ENCODE measurements at regions of chr15 and their contacts with region 1.

Region 1: DNA sequence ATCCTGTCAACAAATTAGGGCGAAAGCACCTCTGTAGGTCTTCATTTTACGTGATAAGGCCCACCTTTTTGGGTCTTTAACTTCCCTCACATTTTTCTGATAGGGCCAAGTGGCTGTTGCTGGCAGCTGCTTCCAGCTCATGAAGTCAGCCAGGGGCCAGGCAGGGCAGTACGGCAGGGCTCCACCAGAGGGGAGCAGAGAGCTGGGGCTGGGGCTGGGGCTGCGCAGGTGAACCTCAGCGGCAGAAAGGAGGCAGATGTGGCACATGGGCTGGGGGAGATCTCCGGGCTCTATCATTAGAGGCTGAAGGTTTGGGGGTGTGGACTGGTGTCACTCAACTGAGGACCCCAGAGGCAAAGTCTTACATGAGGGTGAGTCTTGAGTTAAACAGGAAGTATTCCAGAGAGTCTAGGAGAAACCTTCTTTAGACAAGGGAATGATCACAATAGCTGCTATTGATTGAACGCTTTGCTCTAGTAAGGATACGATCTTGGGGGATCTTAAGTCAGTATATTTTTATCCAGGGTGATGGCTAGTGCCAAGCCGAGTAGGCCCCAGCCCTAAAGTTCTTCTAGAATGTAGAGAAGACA is 62.8 kb upstream of the MEX3B start:
- DNase-seq: no peak
- H3K4me3 ChIP-seq: no peak overlapping the region
- H3K27ac ChIP-seq: no peak overlapping the region
- H3K27me3 ChIP-seq: no peaks in the 10 kb centered on the region
- CTCF ChIP-seq: peak; percentile 97

Region 2: DNA sequence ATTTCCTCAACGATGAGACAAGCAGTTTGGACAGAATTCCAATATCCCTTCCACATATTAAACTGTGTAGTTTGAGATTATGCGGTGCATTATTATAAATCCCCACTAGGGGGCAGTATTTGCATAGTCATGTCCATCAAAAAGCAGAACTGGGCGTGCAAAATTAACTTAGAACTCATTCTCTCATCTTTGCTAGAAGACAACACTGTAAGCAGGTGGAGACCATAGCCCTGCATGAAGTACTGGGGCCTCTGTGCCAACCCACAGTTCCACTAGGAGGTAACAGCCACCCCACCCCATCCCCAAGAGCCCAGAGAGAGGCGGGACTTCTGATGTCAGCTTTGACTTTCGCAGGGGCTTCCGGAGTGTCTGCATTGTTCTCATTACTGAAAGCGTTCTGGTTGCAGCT is 627.9 kb before region 1 on chr15:
- CTCF ChIA-PET with region 1: interaction called, 14 read pairs
- POLR2A ChIA-PET with region 1: no interaction called
- DNase-seq: peak; percentile 29
- H3K4me3 ChIP-seq: no peak overlapping the region
- H3K27ac ChIP-seq: no peak overlapping the region
- H3K27me3 ChIP-seq: no peaks in the 10 kb centered on the region
- CTCF ChIP-seq: peak; percentile 70

Region 3: DNA sequence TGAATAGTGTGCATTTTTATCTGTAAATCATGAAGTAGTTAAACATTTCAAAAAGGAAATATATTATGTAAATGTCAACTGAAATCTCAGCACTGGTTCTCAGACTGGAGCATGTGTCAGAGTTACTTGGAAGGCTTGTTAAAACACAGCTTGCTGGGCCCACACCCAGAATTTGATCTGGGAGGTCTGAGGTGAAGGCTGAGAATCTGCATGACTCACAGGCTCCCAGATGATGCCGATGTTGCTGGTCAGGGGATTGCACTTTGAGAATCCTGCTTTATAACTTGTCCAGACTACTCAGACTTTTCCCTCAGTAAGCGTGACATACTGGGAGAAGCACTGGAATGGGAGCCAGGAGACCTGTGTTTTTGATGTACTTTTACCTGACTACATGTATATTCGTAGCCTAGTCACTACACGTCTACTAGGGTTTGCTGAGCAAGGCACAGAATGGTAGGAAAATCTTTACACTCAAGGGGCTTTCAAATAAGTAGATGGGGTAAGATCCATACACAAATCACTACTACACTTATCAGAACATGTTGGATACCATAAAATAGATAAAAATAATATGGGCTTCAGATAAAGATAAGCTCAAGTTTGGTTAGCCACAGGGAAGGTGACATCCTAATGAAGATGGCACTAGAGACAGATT is 14.3 kb after region 1 on chr15:
- CTCF ChIA-PET with region 1: interaction called, 65 read pairs
- POLR2A ChIA-PET with region 1: no interaction called
- DNase-seq: peak; percentile 95
- H3K4me3 ChIP-seq: no peak overlapping the region
- H3K27ac ChIP-seq: peak overlapping the region; percentile 69
- H3K27me3 ChIP-seq: no peaks in the 10 kb centered on the region
- CTCF ChIP-seq: no peak

Region 4: GRCh38 chr15:82139823-82140268 is 31.3 kb after region 1 on chr15:
- CTCF ChIA-PET with region 1: interaction called, 56 read pairs
- POLR2A ChIA-PET with region 1: no interaction called
- DNase-seq: no peak
- H3K4me3 ChIP-seq: no peak overlapping the region
- H3K27ac ChIP-seq: no peak overlapping the region
- H3K27me3 ChIP-seq: no peaks in the 10 kb centered on the region
- CTCF ChIP-seq: peak; percentile 82

Region 5: DNA sequence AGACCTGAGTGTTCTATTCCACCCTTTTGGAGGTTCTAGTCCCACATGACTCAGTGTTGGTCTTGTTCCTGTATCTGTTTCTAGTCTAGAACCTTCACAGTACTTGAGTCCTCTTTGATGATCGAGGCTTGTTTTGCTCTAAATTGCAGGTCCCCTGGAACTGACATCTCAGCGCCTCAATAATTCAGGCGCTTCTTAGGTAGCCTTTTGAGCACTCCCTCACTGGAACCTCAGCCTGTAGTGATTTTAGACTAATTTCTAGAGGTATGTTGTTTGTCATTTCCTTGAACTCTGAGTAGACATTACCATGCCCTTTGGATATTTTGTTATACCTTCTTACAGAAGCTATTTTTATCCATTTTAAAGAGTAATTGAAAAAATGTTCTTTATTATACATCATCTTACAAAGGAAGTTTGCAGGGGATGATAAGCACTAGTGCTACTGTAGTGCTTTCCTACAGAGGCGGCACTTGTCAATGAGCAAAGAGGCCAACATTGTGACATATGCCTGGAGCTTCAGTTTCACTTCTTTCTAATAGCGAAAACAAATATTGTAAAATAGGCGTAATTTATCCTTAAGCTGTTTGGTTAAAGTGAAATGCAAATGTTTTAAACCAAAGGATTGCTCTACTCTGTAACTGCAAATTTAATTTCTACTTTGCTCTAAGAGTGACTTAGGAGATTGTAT is 78.3 kb after region 1 on chr15:
- CTCF ChIA-PET with region 1: interaction called, 11 read pairs
- POLR2A ChIA-PET with region 1: no interaction called
- DNase-seq: no peak
- H3K4me3 ChIP-seq: no peak overlapping the region
- H3K27ac ChIP-seq: no peak overlapping the region
- H3K27me3 ChIP-seq: no peaks in the 10 kb centered on the region
- CTCF ChIP-seq: no peak

Measured in AG04450 (cell line).